HCT116 (cell line): ENCODE measurements at regions of chr7 and their contacts with region 1.

Region 1: DNA sequence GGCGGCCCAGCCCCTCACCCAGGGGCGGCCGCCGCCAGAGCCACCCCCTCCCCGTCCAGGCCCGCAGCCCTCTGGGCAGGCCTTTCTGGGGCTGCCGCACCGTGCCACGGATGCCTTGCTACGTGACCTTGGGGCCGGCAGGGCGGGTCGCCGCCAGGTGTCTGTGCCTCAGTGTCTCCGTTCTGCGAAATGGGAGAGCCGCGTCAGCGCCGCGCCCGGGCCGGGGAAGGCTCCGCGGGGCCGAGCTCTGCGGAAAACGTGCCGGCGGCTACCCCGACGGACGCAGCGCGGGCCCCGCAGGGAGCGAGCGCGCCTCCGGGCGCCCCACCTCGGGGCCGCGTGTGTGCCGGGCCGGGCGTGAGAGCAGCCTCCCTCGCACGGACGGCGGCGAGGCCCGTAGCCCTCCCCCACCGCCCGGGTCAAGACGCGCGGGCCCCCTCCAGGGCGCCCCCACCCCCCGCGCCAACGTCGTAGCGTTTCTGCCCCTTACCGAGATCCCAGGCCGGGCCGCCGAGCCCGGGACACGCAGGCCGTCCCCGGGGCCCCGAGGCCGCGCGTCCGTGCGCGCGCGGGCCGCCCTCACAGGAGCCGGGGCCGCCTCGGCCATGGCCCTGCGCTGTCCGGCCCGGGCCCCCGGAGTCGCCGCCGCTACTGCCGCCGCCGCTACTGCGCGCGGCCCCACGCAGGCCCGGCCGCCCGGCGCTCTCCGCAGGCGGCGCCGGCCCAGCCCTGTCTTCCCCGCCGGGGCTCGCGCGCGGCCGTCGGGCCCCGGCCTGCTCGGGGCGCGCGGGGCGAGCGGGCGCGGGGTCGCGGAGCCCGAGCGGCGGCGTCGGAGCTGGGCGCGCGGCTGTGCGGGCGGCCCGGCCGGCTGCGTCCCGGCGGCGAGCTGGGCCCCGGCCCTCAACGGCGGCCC is 1.1 kb downstream of the ZNF777 start:
- DNase-seq: no peak
- ATAC-seq: peak; percentile 55
- H3K4me3 ChIP-seq: peak overlapping the region; percentile 61 to 84
- H3K27ac ChIP-seq: peak overlapping the region; percentile 85; the same call in 1 of the 2 replicates
- H3K4me1 ChIP-seq: peaks cover 11 to 19% of the 10 kb centered on the region in 2 experiments; a peak in 2 of 4 replicates
- H3K27me3 ChIP-seq: no peaks in the 10 kb centered on the region
- CTCF ChIP-seq: no peak
- POLR2A ChIP-seq: no peak
- RAD21 ChIP-seq: no peak

Region 2: GRCh38 chr7:148987010-148987750 is 472.6 kb before region 1 on chr7:
- CTCF ChIA-PET with region 1: no interaction called
- POLR2A ChIA-PET with region 1: no interaction called
- RAD21 ChIA-PET with region 1: no interaction called
- intact Hi-C with region 1: no loop called
- DNase-seq: peak; percentile 87
- ATAC-seq: peak; percentile 91
- H3K4me3 ChIP-seq: peak overlapping the region; percentile 48 to 62
- H3K27ac ChIP-seq: peak overlapping the region; percentile 54
- H3K4me1 ChIP-seq: peaks cover 4 to 25% of the 10 kb centered on the region in 2 experiments; a peak in 3 of 4 replicates
- H3K27me3 ChIP-seq: no peaks in the 10 kb centered on the region
- CTCF ChIP-seq: no peak
- POLR2A ChIP-seq: no peak
- RAD21 ChIP-seq: no peak

Region 3: DNA sequence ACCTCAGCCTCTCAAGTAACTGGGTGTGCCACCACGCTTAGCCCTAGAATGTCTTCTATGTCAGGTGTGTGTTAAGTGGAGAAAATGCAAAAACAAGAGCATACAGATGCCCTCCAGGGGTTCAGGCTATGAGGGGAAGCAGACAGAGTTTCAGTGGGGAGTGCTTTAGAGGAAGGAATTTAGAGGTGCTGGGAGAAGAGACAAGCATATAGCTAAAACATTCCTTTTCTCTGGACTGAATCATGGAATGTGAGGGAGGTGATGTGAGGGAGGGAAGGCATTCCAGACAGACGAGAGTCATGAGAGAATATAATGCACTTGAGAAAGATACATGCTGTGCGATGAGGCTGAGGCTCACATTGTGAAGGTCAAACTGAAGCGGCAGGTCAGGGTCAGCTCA is 362.7 kb before region 1 on chr7:
- CTCF ChIA-PET with region 1: no interaction called
- POLR2A ChIA-PET with region 1: no interaction called
- RAD21 ChIA-PET with region 1: no interaction called
- intact Hi-C with region 1: no loop called
- DNase-seq: no peak
- ATAC-seq: no peak
- H3K4me3 ChIP-seq: no peak overlapping the region
- H3K27ac ChIP-seq: no peak overlapping the region
- H3K4me1 ChIP-seq: peaks cover 0 to 5% of the 10 kb centered on the region in 2 experiments; a peak in 1 of 4 replicates
- H3K27me3 ChIP-seq: no peaks in the 10 kb centered on the region
- CTCF ChIP-seq: no peak
- POLR2A ChIP-seq: no peak
- RAD21 ChIP-seq: no peak

Region 4: DNA sequence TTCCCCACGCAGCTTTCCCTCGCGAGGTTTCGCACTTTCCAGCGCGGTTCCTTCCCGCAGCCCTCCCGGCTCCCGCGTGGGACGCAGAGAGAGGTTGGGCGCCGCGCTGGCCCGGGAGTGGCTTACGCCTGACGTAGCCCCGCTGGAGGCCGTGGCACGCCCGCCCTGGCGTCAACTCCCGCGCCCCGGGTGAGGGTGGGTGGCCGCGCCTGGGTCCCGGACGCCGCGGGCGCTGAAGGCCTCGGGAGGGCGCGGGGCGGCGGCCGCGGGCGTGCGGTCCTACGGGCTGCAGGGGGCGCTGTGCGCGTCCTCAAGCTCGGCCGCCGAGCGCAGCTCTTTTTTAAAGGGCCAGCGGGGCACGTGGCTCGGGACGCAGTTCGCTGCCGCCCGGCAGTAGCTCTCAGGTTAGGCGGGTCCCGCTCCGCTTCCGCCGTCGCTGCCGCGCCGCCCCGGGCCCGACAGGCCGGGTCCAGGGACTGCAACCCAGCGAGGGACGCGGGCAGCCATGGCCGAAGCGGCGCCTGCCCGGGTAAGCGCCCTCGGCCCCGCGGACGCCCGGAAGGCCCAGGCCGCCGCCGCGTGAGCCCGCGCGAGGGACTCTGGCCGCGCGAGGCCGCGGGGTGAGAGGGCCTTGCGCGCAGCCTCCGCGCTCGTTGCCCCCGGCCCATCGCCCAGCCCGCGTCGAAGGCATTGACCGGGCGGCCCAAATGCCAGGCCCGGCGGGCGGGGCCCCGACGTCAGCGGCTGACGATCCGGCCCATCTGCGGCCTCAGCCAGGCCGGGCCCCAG is 197.8 kb before region 1 on chr7 and contains the start of gene ZNF783:
- CTCF ChIA-PET with region 1: interaction called, 5 read pairs
- POLR2A ChIA-PET with region 1: no interaction called
- RAD21 ChIA-PET with region 1: no interaction called
- intact Hi-C with region 1: loop called (anchors 5 kb)
- DNase-seq: peak; percentile 73
- ATAC-seq: peak; percentile 88
- H3K4me3 ChIP-seq: peak within 1 kb of the TSS; percentile 49 to 57
- H3K27ac ChIP-seq: peak within 1 kb of the TSS; percentile 82
- H3K4me1 ChIP-seq: peaks cover 0 to 19% of the 10 kb centered on the region in 2 experiments; a peak in 3 of 4 replicates
- H3K27me3 ChIP-seq: no peaks in the 10 kb centered on the region
- CTCF ChIP-seq: peak; percentile 62 to 73 (median 73)
- POLR2A ChIP-seq: peak; percentile 68
- RAD21 ChIP-seq: peak; percentile 63
- total RNA-seq, gene ZNF783: 12.5 TPM

Region 5: DNA sequence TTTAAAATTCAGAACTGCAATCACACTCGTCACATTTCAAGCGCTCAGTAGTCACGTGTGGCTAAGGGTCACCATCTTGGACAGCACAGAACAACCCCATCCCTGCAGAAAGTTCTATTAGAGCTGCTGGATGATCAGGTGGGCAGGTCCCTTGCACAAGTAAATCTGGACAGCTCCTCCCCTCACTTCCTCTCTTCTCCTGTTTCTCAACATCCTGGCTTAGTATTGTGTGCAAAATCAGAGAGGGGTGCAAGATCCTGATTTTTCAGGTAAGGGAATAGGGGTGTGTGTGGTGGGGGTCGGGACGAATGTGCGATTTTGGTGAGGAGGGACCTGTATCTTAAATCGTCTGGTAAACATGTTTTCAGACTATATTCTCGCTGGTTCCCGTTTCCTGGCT is 1107.4 kb after region 1 on chr7 and contains the start of gene GIMAP4:
- CTCF ChIA-PET with region 1: no interaction called
- POLR2A ChIA-PET with region 1: no interaction called
- RAD21 ChIA-PET with region 1: no interaction called
- intact Hi-C with region 1: no loop called
- DNase-seq: no peak
- ATAC-seq: no peak
- H3K4me3 ChIP-seq: no peak within 1 kb of the TSS
- H3K27ac ChIP-seq: no peak within 1 kb of the TSS
- H3K4me1 ChIP-seq: no peaks in the 10 kb centered on the region
- H3K27me3 ChIP-seq: 0 out of 2 replicates have a peak, but pooled peaks cover 12% of the 10 kb centered on the region
- CTCF ChIP-seq: no peak
- POLR2A ChIP-seq: no peak
- RAD21 ChIP-seq: no peak
- total RNA-seq, gene GIMAP4: 0.49 TPM